PC-9 (cell line): ENCODE measurements at regions of chr4 and their contacts with region 1.

Region 1: GRCh38 chr4:39103291-39103690 is 41.3 kb downstream of the KLHL5 start:
- DNase-seq: no peak
- H3K4me3 ChIP-seq: no peak overlapping the region
- H3K27ac ChIP-seq: no peak overlapping the region
- H3K4me1 ChIP-seq: no peaks in the 10 kb centered on the region
- H3K27me3 ChIP-seq: no peaks in the 10 kb centered on the region
- CTCF ChIP-seq: no peak

Region 2: DNA sequence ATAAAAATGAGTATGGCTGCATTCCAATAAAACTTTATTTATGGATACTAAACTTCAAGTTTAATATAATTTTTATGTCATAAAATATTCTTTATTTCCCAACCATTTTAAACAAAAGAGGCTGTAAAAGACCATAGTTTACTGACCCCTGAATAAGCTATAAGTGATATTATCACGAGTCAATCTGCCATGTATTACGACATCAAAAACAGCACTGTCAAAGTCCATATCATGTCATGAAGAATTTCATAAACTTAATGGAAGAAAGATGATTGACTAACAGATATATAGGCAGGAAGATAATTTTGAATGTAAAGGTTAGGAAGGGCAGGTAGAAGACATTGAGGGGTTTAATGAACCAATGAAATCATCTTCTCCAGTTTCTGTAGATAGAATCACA is 89.3 kb before region 1 on chr4:
- CTCF ChIA-PET with region 1: interaction called, 13 read pairs
- POLR2A ChIA-PET with region 1: no interaction called
- intact Hi-C with region 1: no loop called
- DNase-seq: no peak
- H3K4me3 ChIP-seq: no peak overlapping the region
- H3K27ac ChIP-seq: no peak overlapping the region
- H3K4me1 ChIP-seq: no peaks in the 10 kb centered on the region
- H3K27me3 ChIP-seq: no peaks in the 10 kb centered on the region
- CTCF ChIP-seq: no peak

Region 3: GRCh38 chr4:39255266-39255665 is 152.0 kb after region 1 on chr4:
- CTCF ChIA-PET with region 1: no interaction called
- POLR2A ChIA-PET with region 1: no interaction called
- intact Hi-C with region 1: no loop called
- DNase-seq: peak; percentile 28 to 70
- H3K4me3 ChIP-seq: no peak overlapping the region
- H3K27ac ChIP-seq: peak overlapping the region; percentile 15
- H3K4me1 ChIP-seq: peaks cover 13% of the 10 kb centered on the region
- H3K27me3 ChIP-seq: no peaks in the 10 kb centered on the region
- CTCF ChIP-seq: no peak